HepG2 (cell line): ENCODE measurements at regions of chr1 and their contacts with region 1.

Region 1: GRCh38 chr1:56831871-56832693 is 12.9 kb upstream of the FYB2 start:
- DNase-seq: peak; percentile 67
- ATAC-seq: peak; percentile 64
- H3K4me3 ChIP-seq: no peak overlapping the region
- H3K27ac ChIP-seq: no peak overlapping the region
- H3K4me1 ChIP-seq: peaks cover 49% of the 10 kb centered on the region
- H3K27me3 ChIP-seq: no peaks in the 10 kb centered on the region
- CTCF ChIP-seq: peak; percentile 89
- EP300 ChIP-seq: no peak
- POLR2A ChIP-seq: no peak
- RAD21 ChIP-seq: peak; percentile 90

Region 2: DNA sequence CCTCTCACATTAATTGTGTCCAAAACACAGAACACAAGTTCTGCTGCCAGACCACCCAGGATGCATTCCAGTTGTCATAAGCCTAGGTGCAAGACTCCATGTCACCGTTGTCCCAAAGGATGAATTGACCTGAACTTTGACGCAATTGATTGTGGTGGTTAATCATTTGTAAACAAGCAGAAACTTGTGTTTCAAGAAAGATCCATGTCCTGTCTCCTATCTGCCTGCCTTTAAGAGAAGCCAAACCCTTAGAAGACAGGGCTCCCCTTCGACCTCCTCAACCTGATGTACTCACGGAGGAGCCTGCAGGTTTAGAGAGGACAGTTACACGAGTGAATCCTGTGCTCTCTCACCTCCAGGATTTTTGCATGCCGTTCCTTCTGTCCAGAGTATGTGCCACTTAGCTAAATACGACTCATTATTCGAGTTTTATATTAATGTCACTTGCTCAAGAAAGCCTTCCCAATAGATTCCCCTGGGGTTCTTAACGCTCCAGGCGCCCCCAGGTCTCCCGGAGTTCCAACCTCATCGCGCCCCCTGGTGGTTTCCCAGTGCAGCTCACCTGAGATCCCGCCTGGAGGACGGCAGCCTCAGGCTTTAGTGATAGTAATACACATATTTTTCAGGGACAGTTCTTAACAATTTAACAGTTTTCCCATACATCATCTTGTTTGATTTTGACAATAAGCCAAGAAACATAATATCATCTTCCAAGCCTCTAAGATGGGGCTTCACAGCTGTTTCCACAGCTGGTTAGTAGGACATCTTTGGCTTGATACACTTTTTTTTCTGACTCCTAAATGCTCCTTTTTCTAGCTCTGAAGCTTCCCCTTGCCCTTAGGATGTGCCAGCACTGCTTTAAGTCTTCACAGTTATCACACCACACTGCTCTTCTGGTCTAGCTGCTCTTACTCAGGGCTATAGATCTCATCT is 136.1 kb after region 1 on chr1:
- CTCF ChIA-PET with region 1: interaction called, 51 read pairs
- POLR2A ChIA-PET with region 1: interaction called, 6 read pairs
- in situ Hi-C with region 1: loop called (anchors 5 kb)
- intact Hi-C with region 1: loop called (anchors 1 kb)
- DNase-seq: peak; percentile 58
- ATAC-seq: peak; percentile 56
- H3K4me3 ChIP-seq: no peak overlapping the region; a peak in 1 of 6 replicates
- H3K27ac ChIP-seq: peak overlapping the region; percentile 65
- H3K4me1 ChIP-seq: peaks cover 73% of the 10 kb centered on the region
- H3K27me3 ChIP-seq: no peaks in the 10 kb centered on the region
- CTCF ChIP-seq: peak; percentile 81
- EP300 ChIP-seq: peak in 1 of 2 experiments; percentile 72; a peak in 1 of 4 replicates
- POLR2A ChIP-seq: no peak
- RAD21 ChIP-seq: peak; percentile 89

Region 3: GRCh38 chr1:57033222-57034001 is 201.3 kb after region 1 on chr1:
- CTCF ChIA-PET with region 1: no interaction called
- POLR2A ChIA-PET with region 1: no interaction called
- in situ Hi-C with region 1: no loop called
- intact Hi-C with region 1: no loop called
- DNase-seq: no peak
- ATAC-seq: no peak
- H3K4me3 ChIP-seq: no peak overlapping the region
- H3K27ac ChIP-seq: no peak overlapping the region
- H3K4me1 ChIP-seq: peaks cover 11% of the 10 kb centered on the region
- H3K27me3 ChIP-seq: 0 out of 5 replicates have a peak, but pooled peaks cover 0 to 3% of the 10 kb centered on the region in 2 experiments
- CTCF ChIP-seq: no peak
- EP300 ChIP-seq: no peak
- POLR2A ChIP-seq: no peak
- RAD21 ChIP-seq: no peak

Region 4: DNA sequence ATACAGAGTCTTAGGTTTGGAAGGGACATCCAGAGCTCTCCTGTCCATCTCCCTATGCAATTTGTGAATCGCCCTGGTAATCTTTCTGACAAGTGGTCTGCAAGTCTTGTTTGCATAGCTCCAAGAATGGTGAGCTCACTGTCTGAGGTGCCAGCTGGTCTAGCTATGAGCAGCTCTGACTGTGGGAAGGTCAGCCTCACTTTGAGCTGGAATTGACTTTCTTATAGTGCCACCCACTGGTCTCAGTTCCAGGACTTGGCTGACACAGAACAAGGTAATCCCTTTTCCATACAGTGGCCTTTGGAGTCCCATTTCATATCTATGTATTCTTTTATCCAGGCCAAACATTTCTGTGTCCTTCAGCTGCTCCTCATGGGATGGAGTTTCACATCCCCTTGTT is 229.3 kb after region 1 on chr1:
- CTCF ChIA-PET with region 1: interaction called, 4 read pairs
- POLR2A ChIA-PET with region 1: interaction called, 3 read pairs
- in situ Hi-C with region 1: loop called (anchors 5 kb)
- intact Hi-C with region 1: loop called (anchors 1 kb)
- DNase-seq: peak; percentile 76
- ATAC-seq: peak; percentile 93
- H3K4me3 ChIP-seq: 0 out of 6 replicates have a peak overlapping the region, but pooled peaks of 1 of the 3 experiments have one; percentile 13
- H3K27ac ChIP-seq: no peak overlapping the region
- H3K4me1 ChIP-seq: peaks cover 59% of the 10 kb centered on the region
- H3K27me3 ChIP-seq: no peaks in the 10 kb centered on the region
- CTCF ChIP-seq: peak; percentile 87
- EP300 ChIP-seq: no peak
- POLR2A ChIP-seq: no peak
- RAD21 ChIP-seq: peak; percentile 71

Region 5: DNA sequence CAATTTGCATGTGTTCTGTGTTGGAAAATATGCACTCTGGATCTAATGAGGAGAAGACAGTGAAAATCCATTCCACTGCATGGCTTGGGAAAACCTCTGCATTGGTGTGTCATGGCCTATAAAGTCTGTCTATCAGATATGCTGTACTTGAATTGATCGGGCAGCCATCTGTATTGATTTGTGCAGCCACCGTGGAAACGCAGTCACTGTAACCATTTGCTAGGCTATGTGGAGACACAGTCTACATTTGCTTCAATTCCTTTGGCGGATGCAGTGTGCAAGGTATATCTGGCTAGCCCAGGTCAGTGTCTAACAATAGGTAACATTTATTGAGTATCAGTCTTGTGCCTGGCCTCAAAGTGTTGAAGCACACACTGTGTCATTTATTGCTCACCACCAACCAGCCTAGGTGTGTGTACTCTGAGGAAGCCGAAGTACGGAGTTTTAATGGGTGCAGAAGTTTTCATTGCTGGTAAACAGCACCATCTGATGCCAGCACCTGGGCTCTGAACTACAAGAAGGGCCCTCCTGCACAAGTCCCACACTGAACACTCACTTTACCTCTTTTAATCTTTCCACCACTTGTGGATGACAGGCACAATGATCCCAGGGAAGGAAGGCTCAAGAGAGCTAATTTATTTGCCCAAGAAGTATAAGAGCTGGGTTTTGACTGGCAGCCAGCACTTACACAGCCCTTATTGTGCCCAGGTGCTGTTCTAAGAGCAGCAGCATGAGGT is 508.4 kb after region 1 on chr1:
- CTCF ChIA-PET with region 1: interaction called, 3 read pairs
- POLR2A ChIA-PET with region 1: no interaction called
- in situ Hi-C with region 1: no loop called
- intact Hi-C with region 1: loop called (anchors 2 kb)
- DNase-seq: peak; percentile 10
- ATAC-seq: peak; percentile 75
- H3K4me3 ChIP-seq: no peak overlapping the region
- H3K27ac ChIP-seq: no peak overlapping the region
- H3K4me1 ChIP-seq: no peaks in the 10 kb centered on the region
- H3K27me3 ChIP-seq: no peaks in the 10 kb centered on the region
- CTCF ChIP-seq: peak; percentile 59
- EP300 ChIP-seq: no peak
- POLR2A ChIP-seq: no peak
- RAD21 ChIP-seq: peak; percentile 44; the same call in 1 of the 2 replicates